Activated CD4-positive, alpha-beta memory T cell treated with anti-CD3 and anti-CD28 coated beads for 36 hours (primary cell): ENCODE measurements at regions of chr17 and their contacts with region 1.

Region 1: DNA sequence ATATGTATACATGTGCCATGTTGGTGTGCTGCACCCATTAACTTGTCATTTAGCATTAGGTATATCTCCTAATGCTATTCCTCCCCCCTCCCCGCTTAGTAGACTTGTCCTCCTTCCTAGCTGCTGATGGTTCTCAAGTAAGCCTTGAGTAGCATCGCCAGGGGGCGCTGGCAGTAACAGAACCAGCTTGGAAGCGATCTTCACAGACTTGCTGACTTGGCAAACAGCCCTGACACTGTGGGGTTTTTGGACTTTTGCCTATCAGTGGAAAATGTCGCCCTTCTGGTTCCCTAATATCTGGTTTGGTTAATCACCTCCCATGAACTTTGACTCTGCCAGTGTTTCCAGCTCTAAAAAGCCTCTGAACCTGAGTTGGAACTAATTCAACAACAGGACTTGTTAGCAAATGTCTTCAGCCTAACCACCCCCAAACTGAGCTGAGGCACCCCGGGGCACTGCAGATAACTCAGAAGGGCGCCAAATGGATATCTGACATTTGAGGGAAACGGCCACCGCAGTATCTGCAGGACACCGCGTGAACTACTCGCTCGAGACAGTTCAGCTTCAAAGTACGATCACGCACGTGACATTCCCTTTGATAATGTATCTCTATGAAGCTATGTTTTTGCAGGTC is 15.4 kb upstream of the SPATA32 start:
- DNase-seq: peak; percentile 93
- H3K4me3 Mint-ChIP-seq: no peak overlapping the region
- H3K27ac Mint-ChIP-seq: peak overlapping the region; percentile 74
- H3K4me1 Mint-ChIP-seq: peaks cover 16% of the 10 kb centered on the region
- H3K27me3 Mint-ChIP-seq: no peaks in the 10 kb centered on the region

Region 2: DNA sequence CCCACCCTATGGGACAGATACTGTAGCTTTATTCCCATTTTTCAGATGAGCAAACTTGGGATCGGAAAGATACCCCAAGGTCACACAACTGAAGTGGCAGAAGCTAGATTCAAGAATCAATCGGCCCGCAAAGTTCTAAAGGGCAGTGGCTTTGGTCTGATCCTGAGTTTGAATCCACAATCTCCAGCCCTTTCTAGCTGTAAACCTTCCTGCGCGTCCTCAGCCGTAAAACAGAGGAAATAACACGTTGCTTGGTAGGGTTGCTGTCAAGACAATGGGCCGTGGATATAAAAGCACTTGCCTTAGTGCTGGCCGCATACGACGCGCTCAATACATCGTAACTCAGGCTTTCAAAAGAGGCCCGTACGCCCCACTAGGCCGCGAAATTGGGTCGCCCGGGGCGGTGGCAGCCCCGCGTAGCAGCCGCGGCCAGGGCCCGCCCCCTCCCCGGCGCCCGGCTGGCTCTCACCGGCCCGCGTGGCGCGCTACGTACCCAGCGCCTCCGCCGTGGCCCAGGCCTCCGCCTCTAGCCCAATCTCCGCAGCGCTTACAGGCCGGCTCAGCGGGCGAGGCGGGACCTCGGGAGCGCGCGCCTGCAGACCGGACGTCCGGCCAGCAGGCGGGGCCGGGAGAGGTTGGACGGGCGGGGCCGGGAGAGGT is 226.1 kb before region 1 on chr17 and contains the start of gene DCAKD:
- CTCF ChIA-PET with region 1: no interaction called
- POLR2A ChIA-PET with region 1: no interaction called
- intact Hi-C with region 1: no loop called
- DNase-seq: peak; percentile 95
- H3K4me3 Mint-ChIP-seq: peak within 1 kb of the TSS; percentile 93
- H3K27ac Mint-ChIP-seq: peak within 1 kb of the TSS; percentile 94
- H3K4me1 Mint-ChIP-seq: peaks cover 45% of the 10 kb centered on the region
- H3K27me3 Mint-ChIP-seq: no peaks in the 10 kb centered on the region
- total RNA-seq, gene DCAKD: 32.0 to 34.0 TPM

Region 3: DNA sequence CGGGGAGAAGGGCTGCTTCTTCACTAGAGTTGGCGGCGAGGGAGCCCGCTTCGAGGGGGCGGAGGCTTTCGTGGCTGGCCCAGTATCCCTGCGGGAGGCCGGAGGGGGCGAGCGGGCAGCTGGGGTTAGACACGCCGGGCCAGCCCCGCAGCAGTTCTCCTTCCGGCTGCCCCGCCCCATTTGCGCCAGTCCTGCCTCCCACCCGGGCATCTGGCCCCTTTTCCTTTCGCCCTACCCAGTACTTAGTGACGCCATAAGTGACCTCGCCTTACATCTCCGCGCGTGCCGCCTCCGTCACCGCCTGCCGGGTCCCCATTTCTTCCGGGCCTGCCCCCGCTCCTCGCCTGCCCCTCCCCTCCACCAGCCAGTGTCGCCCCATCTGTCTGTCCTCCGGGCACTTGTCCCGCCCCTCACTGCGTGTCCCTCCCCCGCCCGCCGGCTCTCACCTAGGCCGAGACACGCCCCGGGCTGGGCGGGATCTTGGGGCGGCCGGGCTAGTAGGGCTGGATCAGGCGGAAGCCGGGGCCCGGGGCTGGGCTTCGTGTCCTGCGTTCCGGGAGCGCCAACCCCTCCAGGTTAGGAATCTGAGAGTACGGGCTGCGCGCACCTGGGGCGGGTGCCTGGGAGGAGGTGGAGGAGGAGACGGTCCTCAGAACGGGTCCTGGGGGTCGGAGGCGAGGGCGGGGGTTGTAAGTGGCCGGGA is 29.8 kb before region 1 on chr17:
- CTCF ChIA-PET with region 1: interaction called, 12 read pairs
- POLR2A ChIA-PET with region 1: no interaction called
- intact Hi-C with region 1: no loop called
- DNase-seq: peak; percentile 99
- H3K4me3 Mint-ChIP-seq: peak overlapping the region; percentile 86
- H3K27ac Mint-ChIP-seq: peak overlapping the region; percentile 94
- H3K4me1 Mint-ChIP-seq: peaks cover 59% of the 10 kb centered on the region
- H3K27me3 Mint-ChIP-seq: no peaks in the 10 kb centered on the region

Region 4: GRCh38 chr17:45293413-45294211 is 16.3 kb after region 1 on chr17:
- CTCF ChIA-PET with region 1: interaction called, 36 read pairs
- POLR2A ChIA-PET with region 1: interaction called, 3 read pairs
- intact Hi-C with region 1: no loop called
- DNase-seq: peak; percentile 57
- H3K4me3 Mint-ChIP-seq: no peak overlapping the region
- H3K27ac Mint-ChIP-seq: peak overlapping the region; percentile 79
- H3K4me1 Mint-ChIP-seq: peaks cover 72% of the 10 kb centered on the region
- H3K27me3 Mint-ChIP-seq: no peaks in the 10 kb centered on the region

Region 5: DNA sequence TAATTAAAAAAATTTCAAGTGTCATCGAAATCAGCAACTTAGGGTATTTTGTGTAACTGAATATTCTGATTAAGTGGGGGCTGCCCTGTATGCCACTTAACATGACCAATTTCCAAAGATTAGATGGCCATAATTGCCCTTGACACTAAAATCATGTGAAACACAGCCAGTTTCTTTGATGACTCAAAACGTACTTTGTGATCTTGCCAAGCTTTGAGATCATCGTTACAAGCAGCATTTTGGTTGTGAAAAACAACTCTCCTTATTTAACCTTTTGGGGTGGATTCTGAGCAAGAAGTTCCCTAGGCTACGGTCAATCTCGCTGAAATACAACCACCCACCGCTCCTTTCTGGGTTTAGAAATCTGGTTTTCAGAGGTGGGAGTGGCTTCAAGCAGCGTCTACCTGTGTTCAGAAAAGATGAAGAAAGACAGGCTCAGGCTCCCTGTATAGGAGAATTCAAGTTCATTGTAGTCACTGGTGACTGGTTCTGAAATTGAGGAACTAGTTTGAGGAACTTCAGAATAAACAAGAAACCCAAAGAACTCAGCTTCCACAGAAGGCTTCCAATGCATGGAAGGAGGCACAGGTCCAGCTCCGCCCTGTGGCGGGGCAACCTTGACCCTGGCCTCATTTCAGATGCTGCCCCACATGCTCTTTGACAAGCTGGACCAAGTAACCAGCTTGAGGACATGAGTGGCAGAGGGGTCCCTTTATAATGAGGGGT is 30.1 kb after region 1 on chr17:
- CTCF ChIA-PET with region 1: interaction called, 27 read pairs
- POLR2A ChIA-PET with region 1: interaction called, 4 read pairs
- intact Hi-C with region 1: loop called (anchors 5 kb)
- DNase-seq: peak; percentile 80
- H3K4me3 Mint-ChIP-seq: peak overlapping the region; percentile 53
- H3K27ac Mint-ChIP-seq: peak overlapping the region; percentile 97
- H3K4me1 Mint-ChIP-seq: peaks cover 84% of the 10 kb centered on the region
- H3K27me3 Mint-ChIP-seq: no peaks in the 10 kb centered on the region

Region 6: GRCh38 chr17:45391918-45392317 is 114.6 kb after region 1 on chr17:
- CTCF ChIA-PET with region 1: interaction called, 249 read pairs
- POLR2A ChIA-PET with region 1: no interaction called
- intact Hi-C with region 1: no loop called
- DNase-seq: no peak
- H3K4me3 Mint-ChIP-seq: no peak overlapping the region
- H3K27ac Mint-ChIP-seq: no peak overlapping the region
- H3K4me1 Mint-ChIP-seq: peaks cover 7% of the 10 kb centered on the region
- H3K27me3 Mint-ChIP-seq: peaks cover 7% of the 10 kb centered on the region